ENCODE measurements at regions of chr11 and their contacts with region 1.

Region 1: GRCh38 chr11:89490981-89491690 is at the start of gene NOX4:
- DNase-seq: no peak
- H3K4me3 ChIP-seq: no peak within 1 kb of the TSS
- H3K4me3 Mint-ChIP-seq: no peak within 1 kb of the TSS
- H3K27ac Mint-ChIP-seq: peak within 1 kb of the TSS; percentile 28
- H3K4me1 ChIP-seq: 0 out of 2 replicates have a peak, but pooled peaks cover 3% of the 10 kb centered on the region
- H3K4me1 Mint-ChIP-seq: no peaks in the 10 kb centered on the region
- H3K27me3 ChIP-seq: no peaks in the 10 kb centered on the region
- H3K27me3 Mint-ChIP-seq: no peaks in the 10 kb centered on the region
- CTCF ChIP-seq: no peak
- total RNA-seq, gene NOX4: 0.14 TPM in 1 of 2 replicates, not detected in the other

Region 2: DNA sequence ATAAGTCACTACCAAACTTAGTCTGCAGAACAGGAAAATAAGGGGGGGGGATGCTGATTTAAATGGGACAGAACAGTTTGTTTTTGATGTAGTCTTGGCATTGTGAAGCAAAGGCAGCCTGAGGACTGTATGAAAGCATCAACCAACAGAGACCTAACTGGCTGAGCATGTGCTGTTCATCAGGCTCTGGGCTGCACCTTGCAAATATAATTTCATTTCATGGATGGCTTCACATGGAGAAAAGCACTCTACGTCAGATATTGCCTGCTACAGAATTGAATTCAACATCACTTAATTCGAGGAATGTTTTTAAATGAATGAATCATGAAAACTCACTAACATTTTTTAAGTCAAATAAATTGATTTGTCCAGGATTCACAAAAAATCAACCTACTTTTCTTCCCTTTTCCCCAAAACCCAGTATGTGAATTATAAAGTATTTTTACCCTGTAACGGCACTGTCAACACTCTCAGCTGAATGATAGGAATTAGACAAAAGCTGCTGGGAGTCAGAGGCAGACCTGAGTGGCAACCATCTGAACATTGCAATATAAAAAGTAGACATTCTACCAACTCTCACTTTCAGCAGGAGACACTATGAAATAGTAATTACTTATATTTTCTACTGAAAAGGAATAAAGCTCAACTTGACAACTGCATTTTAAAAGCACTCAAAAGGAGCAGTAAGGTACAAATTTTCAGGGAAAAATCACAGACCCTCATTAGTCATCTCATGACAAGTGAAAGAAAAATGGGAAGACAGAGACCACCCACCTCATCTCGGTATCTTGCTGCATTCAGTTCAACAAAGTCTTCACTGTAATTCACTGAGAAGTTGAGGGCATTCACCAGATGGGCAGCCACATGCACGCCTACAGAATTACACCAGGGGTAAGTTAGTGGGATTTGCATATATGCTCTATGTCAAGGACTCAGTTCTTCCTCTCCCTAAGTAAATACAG is 47.5 kb before region 1 on chr11:
- CTCF ChIA-PET with region 1: no interaction called
- POLR2A ChIA-PET with region 1: no interaction called
- intact Hi-C with region 1: loop called (anchors 5 kb)
- DNase-seq: no peak
- H3K4me3 ChIP-seq: no peak overlapping the region
- H3K4me3 Mint-ChIP-seq: no peak overlapping the region
- H3K27ac Mint-ChIP-seq: no peak overlapping the region
- H3K4me1 ChIP-seq: no peaks in the 10 kb centered on the region
- H3K4me1 Mint-ChIP-seq: no peaks in the 10 kb centered on the region
- H3K27me3 ChIP-seq: no peaks in the 10 kb centered on the region
- H3K27me3 Mint-ChIP-seq: peaks cover 10% of the 10 kb centered on the region
- CTCF ChIP-seq: no peak

Region 3: DNA sequence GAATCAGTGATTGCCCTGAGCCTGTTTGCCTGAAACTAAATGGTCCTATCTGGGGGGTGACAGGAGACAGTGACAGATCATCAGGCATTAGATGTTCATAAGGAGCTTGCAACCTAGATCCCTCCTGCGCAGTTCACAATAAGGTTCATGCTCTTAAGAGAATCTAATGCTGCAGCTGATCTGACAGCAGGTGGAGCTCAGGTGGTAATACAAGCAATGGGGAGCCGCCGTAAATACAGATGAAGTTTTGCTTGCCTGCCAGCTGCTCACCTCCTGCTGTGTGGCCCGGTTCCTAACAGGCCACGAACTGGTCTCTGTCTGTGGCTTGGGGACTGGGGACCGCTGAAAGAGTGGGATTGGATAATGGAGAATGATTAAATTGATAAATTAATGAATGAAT is 14.0 kb before region 1 on chr11:
- CTCF ChIA-PET with region 1: no interaction called
- POLR2A ChIA-PET with region 1: no interaction called
- intact Hi-C with region 1: no loop called
- DNase-seq: peak; percentile 73 to 74
- H3K4me3 ChIP-seq: no peak overlapping the region
- H3K4me3 Mint-ChIP-seq: no peak overlapping the region
- H3K27ac Mint-ChIP-seq: no peak overlapping the region
- H3K4me1 ChIP-seq: no peaks in the 10 kb centered on the region
- H3K4me1 Mint-ChIP-seq: peaks cover 6% of the 10 kb centered on the region
- H3K27me3 ChIP-seq: no peaks in the 10 kb centered on the region
- H3K27me3 Mint-ChIP-seq: peaks cover 3% of the 10 kb centered on the region
- CTCF ChIP-seq: peak; percentile 51 to 68

Region 4: GRCh38 chr11:90380206-90380605 is 889.1 kb after region 1 on chr11:
- CTCF ChIA-PET with region 1: no interaction called
- POLR2A ChIA-PET with region 1: no interaction called
- intact Hi-C with region 1: no loop called
- DNase-seq: no peak
- H3K4me3 ChIP-seq: no peak overlapping the region
- H3K4me3 Mint-ChIP-seq: no peak overlapping the region
- H3K27ac Mint-ChIP-seq: no peak overlapping the region
- H3K4me1 ChIP-seq: no peaks in the 10 kb centered on the region
- H3K4me1 Mint-ChIP-seq: no peaks in the 10 kb centered on the region
- H3K27me3 ChIP-seq: no peaks in the 10 kb centered on the region
- H3K27me3 Mint-ChIP-seq: no peaks in the 10 kb centered on the region
- CTCF ChIP-seq: no peak

Measured in Caco-2 (cell line).